GM13977 (cell line): ENCODE measurements at regions of chr6 and their contacts with region 1.

Region 1: DNA sequence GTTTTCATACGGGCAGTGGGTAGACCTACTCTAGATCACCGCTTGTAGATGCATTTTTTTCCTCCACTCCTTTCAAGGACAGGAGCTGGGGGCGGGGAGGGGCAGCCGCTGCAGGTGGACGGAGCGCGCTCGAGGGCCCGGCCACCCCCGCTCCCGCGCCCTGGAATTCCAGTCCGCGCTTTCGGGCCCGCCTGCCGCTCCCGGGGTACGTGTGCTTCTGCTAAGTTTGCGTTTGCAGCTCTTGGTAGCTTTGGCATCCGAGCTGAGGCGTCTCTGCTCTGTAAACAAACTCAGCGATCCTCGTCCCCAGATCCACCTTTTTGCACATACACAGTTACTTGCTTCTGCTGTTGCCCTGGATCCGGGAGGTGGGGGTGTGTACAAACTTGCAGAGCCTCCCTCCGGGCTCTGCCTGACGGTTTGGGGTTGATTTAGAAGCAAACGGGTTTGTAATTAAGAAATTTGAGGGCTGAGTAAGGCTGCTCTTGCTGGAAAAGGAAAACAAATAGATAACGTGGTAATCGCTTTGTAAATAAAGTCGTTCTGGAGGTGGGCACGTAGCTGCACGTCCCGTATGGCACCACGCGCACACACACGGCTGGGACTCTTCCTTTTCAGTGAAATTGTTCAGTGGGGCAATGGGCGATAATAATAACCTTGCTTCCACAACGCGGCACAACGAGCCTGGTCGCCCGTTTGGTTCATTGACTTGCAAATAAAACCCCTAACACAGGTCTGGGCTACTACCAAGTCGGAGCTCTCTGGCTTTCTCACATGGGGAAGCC is 976 bp upstream of the CITED2 start:
- DNase-seq: peak; percentile 74
- CTCF ChIP-seq: no peak

Region 2: GRCh38 chr6:139881728-139882211 is 506.3 kb after region 1 on chr6:
- in situ Hi-C with region 1: loop called (anchors 25 kb)
- DNase-seq: peak; percentile 37
- CTCF ChIP-seq: peak; percentile 50

Region 3: DNA sequence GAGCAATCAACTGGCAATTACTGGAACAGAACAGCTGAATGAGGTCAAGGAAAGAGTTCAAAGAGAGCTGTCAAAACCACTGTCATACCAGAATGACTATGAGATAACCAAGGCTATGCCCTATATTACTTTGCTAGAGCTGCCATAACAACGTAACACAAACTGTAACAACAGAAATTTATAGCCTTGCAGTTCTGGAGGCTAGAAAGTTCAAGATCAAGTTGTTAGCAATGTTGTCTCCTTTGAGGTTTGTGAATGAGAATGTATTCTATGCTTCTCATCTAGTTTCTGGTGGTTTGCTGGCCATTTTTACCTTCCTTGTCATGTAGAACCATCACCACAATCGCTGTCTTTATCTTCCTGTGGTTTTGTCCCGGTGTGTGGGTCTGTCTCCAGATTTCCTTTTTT is 1434.3 kb after region 1 on chr6:
- in situ Hi-C with region 1: no loop called
- DNase-seq: peak; percentile 39
- CTCF ChIP-seq: no peak